Natural killer cell (primary cell): ENCODE measurements at regions of chr5 and their contacts with region 1.

Region 1: GRCh38 chr5:132662925-132663770 is 5.2 kb downstream of the IL13 start:
- DNase-seq: peak in 1 of 2 donors; percentile 69
- ATAC-seq: peak; percentile 42 to 66 (median 54)
- H3K4me3 ChIP-seq: no peak overlapping the region
- H3K4me3 Mint-ChIP-seq: no peak overlapping the region
- H3K27ac ChIP-seq: peak overlapping the region; percentile 50
- H3K27ac Mint-ChIP-seq: peak overlapping the region in 1 of 2 donors; percentile 73
- H3K4me1 ChIP-seq: peaks cover 23% of the 10 kb centered on the region
- H3K4me1 Mint-ChIP-seq: peaks cover 0 to 14% of the 10 kb centered on the region in 2 donors
- H3K27me3 ChIP-seq: no peaks in the 10 kb centered on the region
- H3K27me3 Mint-ChIP-seq: peaks cover 1 to 6% of the 10 kb centered on the region in 2 donors
- CTCF ChIP-seq: no peak

Region 2: DNA sequence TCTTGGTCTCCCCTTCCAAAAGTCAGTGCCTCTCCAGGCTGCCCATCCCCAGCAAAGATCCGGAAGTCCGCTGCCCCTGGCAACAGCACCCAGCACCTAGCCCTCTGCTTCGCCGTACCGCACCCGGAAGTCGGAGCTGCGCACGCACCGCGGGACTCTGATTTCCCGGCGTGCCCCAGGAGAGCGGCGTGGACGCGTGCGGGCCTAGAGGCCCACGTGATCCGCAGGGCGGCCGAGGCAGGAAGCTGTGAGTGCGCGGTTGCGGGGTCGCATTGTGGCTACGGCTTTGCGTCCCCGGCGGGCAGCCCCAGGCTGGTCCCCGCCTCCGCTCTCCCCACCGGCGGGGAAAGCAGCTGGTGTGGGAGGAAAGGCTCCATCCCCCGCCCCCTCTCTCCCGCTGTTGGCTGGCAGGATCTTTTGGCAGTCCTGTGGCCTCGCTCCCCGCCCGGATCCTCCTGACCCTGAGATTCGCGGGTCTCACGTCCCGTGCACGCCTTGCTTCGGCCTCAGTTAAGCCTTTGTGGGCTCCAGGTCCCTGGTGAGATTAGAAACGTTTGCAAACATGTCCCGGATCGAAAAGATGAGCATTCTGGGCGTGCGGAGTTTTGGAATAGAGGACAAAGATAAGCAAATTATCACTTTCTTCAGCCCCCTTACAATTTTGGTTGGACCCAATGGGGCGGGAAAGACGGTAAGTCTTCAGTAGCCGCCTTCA is 106.2 kb before region 1 on chr5 and contains the start of gene RAD50:
- intact Hi-C with region 1: no loop called
- DNase-seq: peak; percentile 94 to 96
- ATAC-seq: peak; percentile 95 to 98 (median 96)
- H3K4me3 ChIP-seq: peak within 1 kb of the TSS; percentile 83
- H3K4me3 Mint-ChIP-seq: peak within 1 kb of the TSS; percentile 96
- H3K27ac ChIP-seq: peak within 1 kb of the TSS; percentile 82
- H3K27ac Mint-ChIP-seq: peak within 1 kb of the TSS; percentile 91 to 97
- H3K4me1 ChIP-seq: peaks cover 16% of the 10 kb centered on the region
- H3K4me1 Mint-ChIP-seq: peaks cover 20 to 25% of the 10 kb centered on the region in 2 donors
- H3K27me3 ChIP-seq: no peaks in the 10 kb centered on the region
- H3K27me3 Mint-ChIP-seq: no peaks in the 10 kb centered on the region
- CTCF ChIP-seq: no peak
- total RNA-seq, gene RAD50: 21.0 to 31.2 (median 27.5) TPM

Region 3: DNA sequence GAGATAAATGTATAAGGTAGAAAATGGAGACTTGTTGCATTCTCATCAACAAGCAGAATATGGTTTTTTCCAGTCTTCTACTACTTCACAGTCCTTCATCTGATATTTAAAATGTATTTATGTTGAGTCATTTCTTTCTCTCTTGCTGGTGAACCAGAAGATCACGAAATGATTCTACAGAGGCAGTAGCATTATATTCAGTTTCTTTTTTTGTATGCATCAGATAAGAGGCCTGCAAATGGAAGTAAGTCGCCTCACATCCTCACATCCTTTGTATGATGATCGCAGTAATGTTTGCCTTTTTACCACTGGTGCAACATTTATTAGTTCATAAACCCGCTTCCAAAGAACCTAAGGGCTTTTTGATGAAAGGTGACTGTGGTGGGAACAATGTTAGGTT is 27.3 kb before region 1 on chr5:
- intact Hi-C with region 1: loop called (anchors 1 kb)
- DNase-seq: no peak
- ATAC-seq: no peak
- H3K4me3 ChIP-seq: no peak overlapping the region
- H3K4me3 Mint-ChIP-seq: no peak overlapping the region
- H3K27ac ChIP-seq: no peak overlapping the region
- H3K27ac Mint-ChIP-seq: no peak overlapping the region
- H3K4me1 ChIP-seq: no peaks in the 10 kb centered on the region
- H3K4me1 Mint-ChIP-seq: peaks cover 0 to 5% of the 10 kb centered on the region in 2 donors
- H3K27me3 ChIP-seq: no peaks in the 10 kb centered on the region
- H3K27me3 Mint-ChIP-seq: no peaks in the 10 kb centered on the region
- CTCF ChIP-seq: no peak